ENCODE measurements at regions of chr17 and their contacts with region 1.

Region 1: DNA sequence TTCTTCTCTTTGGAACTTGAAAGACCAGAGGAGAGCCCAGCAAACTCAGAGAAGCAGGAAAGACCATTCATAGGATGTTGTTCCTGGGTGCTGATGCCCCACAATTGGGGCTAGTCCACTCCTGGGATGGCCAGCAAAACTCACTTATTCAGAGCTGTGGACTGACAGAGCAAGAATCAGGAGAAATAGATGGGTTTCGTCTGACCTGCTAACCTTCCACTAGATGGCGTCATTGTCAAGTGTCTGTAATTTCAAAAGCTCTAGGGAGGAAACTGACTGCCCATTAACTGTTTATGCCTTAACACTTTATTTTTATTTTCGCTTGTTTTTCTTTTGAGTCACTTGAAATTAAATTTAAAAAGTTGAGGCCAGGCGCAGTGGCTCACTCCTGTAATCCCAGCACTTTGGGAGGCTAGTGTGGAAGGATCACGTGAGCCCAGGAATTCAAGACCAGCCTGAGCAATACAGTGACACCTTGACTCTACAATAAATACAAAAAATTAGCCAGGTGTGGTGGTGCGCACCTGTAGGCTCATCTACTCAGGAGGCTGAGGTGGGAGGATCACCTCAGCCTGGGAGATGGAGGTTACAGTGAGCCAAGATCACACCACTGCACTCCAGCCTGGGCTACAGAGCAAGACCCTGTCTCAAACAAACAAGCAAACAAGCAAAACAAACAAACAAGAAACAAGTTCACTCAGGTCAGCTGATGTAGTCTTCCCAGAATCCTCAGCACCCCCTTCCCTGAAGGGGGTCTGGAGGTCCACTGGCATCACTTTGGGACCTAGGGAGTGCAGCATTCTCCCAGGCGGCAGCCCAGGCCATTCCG is 28.6 kb upstream of the MILR1 start:
- DNase-seq: no peak
- H3K4me3 Mint-ChIP-seq: no peak overlapping the region
- H3K27ac Mint-ChIP-seq: no peak overlapping the region
- H3K4me1 Mint-ChIP-seq: no peaks in the 10 kb centered on the region
- H3K27me3 Mint-ChIP-seq: no peaks in the 10 kb centered on the region

Region 2: DNA sequence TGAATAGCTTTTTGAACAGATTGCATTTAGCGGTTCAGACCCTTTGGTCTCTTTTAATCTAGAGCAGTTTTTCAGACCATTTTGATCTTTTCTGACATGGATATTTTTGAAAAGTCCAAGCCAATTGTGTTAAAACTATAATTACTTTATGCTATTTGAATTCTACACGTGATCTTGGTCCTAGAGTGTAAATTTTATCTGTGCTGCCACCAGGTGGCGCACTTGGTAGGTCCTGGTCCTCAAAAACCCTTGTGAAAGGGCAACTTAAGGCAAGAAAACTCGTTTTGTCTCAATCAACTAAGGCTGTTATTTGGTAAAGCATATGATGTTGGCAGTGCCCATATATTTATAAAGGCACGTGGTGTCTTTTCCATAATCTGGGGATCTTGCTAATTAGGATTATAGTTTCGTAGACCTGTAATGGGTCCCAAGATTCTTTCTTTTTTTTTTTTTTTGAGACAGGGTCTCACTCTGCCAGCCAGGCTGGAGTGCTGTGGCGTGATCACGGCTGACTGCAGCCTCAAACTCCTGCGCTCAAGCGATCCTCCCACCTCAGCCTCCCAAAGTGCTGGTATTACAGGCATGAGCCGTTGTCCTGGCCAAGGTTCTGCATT is 113.4 kb before region 1 on chr17:
- CTCF ChIA-PET with region 1: interaction called, 84 read pairs
- intact Hi-C with region 1: loop called (anchors 1 kb)
- DNase-seq: peak; percentile 80
- H3K4me3 Mint-ChIP-seq: no peak overlapping the region
- H3K27ac Mint-ChIP-seq: no peak overlapping the region
- H3K4me1 Mint-ChIP-seq: peaks cover 2% of the 10 kb centered on the region
- H3K27me3 Mint-ChIP-seq: no peaks in the 10 kb centered on the region

Region 3: GRCh38 chr17:64348666-64349065 is 71.7 kb before region 1 on chr17:
- CTCF ChIA-PET with region 1: interaction called, 15 read pairs
- intact Hi-C with region 1: no loop called
- DNase-seq: no peak
- H3K4me3 Mint-ChIP-seq: no peak overlapping the region
- H3K27ac Mint-ChIP-seq: no peak overlapping the region
- H3K4me1 Mint-ChIP-seq: peaks cover 32% of the 10 kb centered on the region
- H3K27me3 Mint-ChIP-seq: no peaks in the 10 kb centered on the region

Region 4: GRCh38 chr17:64479650-64480049 is 59.3 kb after region 1 on chr17:
- CTCF ChIA-PET with region 1: interaction called, 13 read pairs
- intact Hi-C with region 1: no loop called
- DNase-seq: no peak
- H3K4me3 Mint-ChIP-seq: no peak overlapping the region
- H3K27ac Mint-ChIP-seq: no peak overlapping the region
- H3K4me1 Mint-ChIP-seq: no peaks in the 10 kb centered on the region
- H3K27me3 Mint-ChIP-seq: no peaks in the 10 kb centered on the region

Region 5: DNA sequence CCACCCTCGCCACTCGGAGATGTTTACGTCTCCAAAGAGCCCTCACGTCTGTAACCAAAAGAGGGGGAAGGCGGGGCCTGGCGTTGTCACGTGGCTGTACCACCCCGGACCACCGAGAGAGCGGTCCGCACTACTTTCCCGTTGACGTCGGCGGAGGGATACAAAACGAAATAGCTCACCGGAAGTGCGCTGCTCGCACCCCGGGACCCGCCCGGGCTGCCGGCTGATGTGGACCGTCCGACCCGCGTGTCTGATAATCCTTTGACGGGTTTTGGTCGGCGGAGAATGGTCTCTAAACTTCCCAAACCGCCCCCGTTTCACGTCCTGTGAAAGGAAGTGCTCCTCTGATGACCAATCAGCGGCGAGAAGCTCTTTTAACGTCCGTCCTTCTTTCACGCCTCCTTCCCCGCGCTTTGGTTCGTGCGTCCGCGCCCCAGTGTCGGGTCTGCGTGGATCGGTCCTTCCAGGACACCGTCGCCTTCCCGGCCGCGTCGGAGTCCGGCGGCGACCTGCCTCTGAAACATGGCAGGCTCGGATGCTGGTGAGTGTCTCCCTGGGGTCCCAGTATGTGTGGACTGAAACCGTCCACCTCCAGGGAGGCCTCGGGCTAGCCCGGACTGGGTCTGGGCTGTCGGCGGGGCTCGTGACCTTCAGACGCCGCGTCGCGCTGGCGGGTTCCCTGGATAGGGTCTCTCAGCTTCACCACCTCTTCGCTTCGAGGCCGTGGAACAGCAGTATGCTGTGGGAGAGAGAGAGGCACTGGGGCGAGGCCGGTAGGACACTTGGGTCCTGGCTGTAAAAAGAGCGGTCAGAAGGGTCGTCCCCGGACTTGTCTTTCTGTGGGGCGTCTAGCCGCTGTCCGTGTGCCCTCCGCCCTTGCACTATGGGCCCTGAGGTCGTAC is 86.5 kb after region 1 on chr17 and contains the start of gene CEP95:
- CTCF ChIA-PET with region 1: interaction called, 9 read pairs
- intact Hi-C with region 1: loop called (anchors 1 kb)
- DNase-seq: peak; percentile 95
- H3K4me3 Mint-ChIP-seq: peak within 1 kb of the TSS; percentile 92
- H3K27ac Mint-ChIP-seq: peak within 1 kb of the TSS; percentile 99
- H3K4me1 Mint-ChIP-seq: peaks cover 53% of the 10 kb centered on the region
- H3K27me3 Mint-ChIP-seq: no peaks in the 10 kb centered on the region
- total RNA-seq, gene CEP95: 38.8 to 43.3 TPM

Region 6: GRCh38 chr17:64591944-64592343 is 171.6 kb after region 1 on chr17:
- CTCF ChIA-PET with region 1: no interaction called
- intact Hi-C with region 1: no loop called
- DNase-seq: no peak
- H3K4me3 Mint-ChIP-seq: no peak overlapping the region
- H3K27ac Mint-ChIP-seq: no peak overlapping the region
- H3K4me1 Mint-ChIP-seq: peaks cover 17% of the 10 kb centered on the region
- H3K27me3 Mint-ChIP-seq: no peaks in the 10 kb centered on the region

Region 7: DNA sequence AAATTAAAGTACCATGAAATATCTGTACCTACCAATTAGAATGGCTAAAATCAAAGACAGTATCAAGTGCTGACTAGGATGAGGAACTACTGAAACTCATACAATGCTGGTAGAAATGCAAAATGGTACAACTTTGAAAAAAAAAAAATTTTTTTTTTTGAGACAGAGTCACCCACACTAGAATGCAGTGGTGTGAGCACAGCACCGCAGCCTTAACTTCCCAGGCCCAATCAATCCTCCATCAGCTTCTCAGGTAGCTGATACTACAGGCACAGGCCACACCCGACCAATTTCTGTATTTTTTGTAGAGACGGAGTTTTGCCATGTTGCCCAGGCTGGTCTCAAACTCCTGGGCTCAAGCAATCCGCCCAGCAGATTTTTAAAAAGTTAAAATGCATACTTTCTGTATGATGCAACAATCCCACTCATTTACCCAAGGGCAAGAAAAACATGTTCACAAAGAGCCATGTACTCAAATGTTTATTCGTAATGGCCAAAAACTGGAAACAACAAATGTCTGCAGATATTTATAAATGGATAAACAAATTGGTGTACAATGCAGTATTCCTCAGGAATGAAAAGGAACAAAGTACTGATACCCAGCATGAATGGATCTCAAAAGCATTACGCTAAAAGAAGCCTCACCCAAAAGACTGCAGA is 233.1 kb after region 1 on chr17:
- CTCF ChIA-PET with region 1: interaction called, 33 read pairs
- intact Hi-C with region 1: loop called (anchors 1 kb)
- DNase-seq: no peak
- H3K4me3 Mint-ChIP-seq: no peak overlapping the region
- H3K27ac Mint-ChIP-seq: peak overlapping the region; percentile 50
- H3K4me1 Mint-ChIP-seq: peaks cover 45% of the 10 kb centered on the region
- H3K27me3 Mint-ChIP-seq: no peaks in the 10 kb centered on the region